Activated CD4-positive, alpha-beta memory T cell treated with anti-CD3 and anti-CD28 coated beads, Interleukin-2, amount 10 ng/mL, durations not matched to agents 7 days and 5 days (primary cell): ENCODE measurements at regions of chr13 and their contacts with region 1.

Region 1: DNA sequence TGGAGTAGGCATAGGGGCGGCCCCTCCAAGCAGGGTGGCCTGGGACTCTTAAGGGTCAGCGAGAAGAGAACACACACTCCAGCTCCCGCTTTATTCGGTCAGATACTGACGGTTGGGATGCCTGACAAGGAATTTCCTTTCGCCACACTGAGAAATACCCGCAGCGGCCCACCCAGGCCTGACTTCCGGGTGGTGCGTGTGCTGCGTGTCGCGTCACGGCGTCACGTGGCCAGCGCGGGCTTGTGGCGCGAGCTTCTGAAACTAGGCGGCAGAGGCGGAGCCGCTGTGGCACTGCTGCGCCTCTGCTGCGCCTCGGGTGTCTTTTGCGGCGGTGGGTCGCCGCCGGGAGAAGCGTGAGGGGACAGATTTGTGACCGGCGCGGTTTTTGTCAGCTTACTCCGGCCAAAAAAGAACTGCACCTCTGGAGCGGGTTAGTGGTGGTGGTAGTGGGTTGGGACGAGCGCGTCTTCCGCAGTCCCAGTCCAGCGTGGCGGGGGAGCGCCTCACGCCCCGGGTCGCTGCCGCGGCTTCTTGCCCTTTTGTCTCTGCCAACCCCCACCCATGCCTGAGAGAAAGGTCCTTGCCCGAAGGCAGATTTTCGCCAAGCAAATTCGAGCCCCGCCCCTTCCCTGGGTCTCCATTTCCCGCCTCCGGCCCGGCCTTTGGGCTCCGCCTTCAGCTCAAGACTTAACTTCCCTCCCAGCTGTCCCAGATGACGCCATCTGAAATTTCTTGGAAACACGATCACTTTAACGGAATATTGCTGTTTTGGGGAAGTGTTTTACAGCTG is at the starts of genes BRCA2 and ZAR1L:
- DNase-seq: peak; percentile 92
- H3K4me3 Mint-ChIP-seq: peak within 1 kb of the TSS; percentile 95
- H3K27ac Mint-ChIP-seq: peak within 1 kb of the TSS; percentile 98
- H3K4me1 Mint-ChIP-seq: peaks cover 43% of the 10 kb centered on the region
- H3K27me3 Mint-ChIP-seq: no peaks in the 10 kb centered on the region
- total RNA-seq, gene BRCA2: 18.3 to 23.6 TPM
- total RNA-seq, gene ZAR1L: not detected

Region 2: GRCh38 chr13:31909864-31910551 is 405.4 kb before region 1 on chr13:
- CTCF ChIA-PET with region 1: interaction called, 17 read pairs
- POLR2A ChIA-PET with region 1: interaction called, 14 read pairs
- DNase-seq: peak; percentile 56
- H3K4me3 Mint-ChIP-seq: no peak overlapping the region
- H3K27ac Mint-ChIP-seq: no peak overlapping the region
- H3K4me1 Mint-ChIP-seq: peaks cover 36% of the 10 kb centered on the region
- H3K27me3 Mint-ChIP-seq: no peaks in the 10 kb centered on the region

Region 3: GRCh38 chr13:32031025-32031814 is 284.2 kb before region 1 on chr13 and contains the start of gene FRY:
- CTCF ChIA-PET with region 1: no interaction called
- POLR2A ChIA-PET with region 1: interaction called, 11 read pairs
- DNase-seq: peak; percentile 56
- H3K4me3 Mint-ChIP-seq: peak within 1 kb of the TSS; percentile 82
- H3K27ac Mint-ChIP-seq: peak within 1 kb of the TSS; percentile 53
- H3K4me1 Mint-ChIP-seq: peaks cover 25% of the 10 kb centered on the region
- H3K27me3 Mint-ChIP-seq: peaks cover 9% of the 10 kb centered on the region
- total RNA-seq, gene FRY: 13.1 to 13.8 TPM

Region 4: DNA sequence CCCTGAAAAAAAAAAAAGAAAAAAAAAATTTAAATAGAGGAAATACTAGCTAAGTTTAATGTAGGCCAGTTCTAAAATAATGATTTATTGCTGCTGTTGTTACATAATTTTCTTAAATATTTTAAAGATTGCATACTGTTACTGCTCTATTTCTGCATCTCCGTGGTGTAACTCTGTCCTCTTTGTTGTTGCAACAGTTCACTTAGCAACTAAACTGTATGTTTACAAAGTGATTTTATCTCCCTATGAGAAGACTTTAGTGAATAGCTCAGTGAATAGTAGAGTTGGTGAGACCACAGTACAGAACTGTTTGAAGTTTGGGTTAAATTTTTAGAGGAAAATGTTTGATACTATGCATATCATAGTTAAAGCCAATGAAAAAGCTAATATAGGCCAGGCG is 19.2 kb after region 1 on chr13:
- CTCF ChIA-PET with region 1: no interaction called
- POLR2A ChIA-PET with region 1: interaction called, 19 read pairs
- DNase-seq: no peak
- H3K4me3 Mint-ChIP-seq: no peak overlapping the region
- H3K27ac Mint-ChIP-seq: no peak overlapping the region
- H3K4me1 Mint-ChIP-seq: no peaks in the 10 kb centered on the region
- H3K27me3 Mint-ChIP-seq: no peaks in the 10 kb centered on the region

Region 5: DNA sequence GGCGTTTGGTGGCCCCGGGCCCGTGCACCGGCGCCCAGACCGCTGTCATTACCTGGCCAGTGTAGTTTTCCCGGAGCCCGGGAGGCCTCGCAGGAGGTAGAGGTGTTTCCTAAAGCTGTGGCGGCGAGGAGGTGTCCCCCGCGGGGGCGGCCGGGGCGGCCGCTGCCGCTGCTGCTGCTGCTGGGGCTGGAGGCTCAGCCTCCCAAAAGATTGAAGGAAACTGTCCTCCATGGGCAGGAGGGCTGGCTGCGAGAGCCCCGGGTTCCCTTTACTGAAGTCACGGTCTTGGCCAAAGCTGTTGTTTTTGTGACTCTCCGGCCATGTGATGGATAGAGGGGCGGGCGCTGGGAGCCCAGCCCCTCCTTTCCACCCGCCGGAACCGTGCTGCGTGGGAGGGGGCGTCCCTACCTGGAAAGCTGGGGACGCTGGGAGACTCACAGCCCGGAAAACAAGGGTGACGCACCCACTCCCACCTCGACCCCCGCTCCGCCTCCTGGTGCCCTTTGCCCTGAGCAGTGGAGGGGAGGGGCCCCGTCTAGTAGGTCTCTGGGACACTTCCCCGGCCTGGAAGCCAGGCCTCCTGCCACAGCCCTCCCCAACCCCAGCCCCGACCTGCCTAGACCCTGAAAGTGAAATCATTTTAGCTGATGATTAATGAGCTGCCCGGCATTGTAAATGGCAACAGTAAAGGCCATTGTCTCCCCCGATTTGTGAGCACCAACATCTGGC is 112.6 kb after region 1 on chr13 and contains the start of gene N4BP2L1:
- CTCF ChIA-PET with region 1: no interaction called
- POLR2A ChIA-PET with region 1: interaction called, 121 read pairs
- DNase-seq: peak; percentile 82
- H3K4me3 Mint-ChIP-seq: peak within 1 kb of the TSS; percentile 99
- H3K27ac Mint-ChIP-seq: peak within 1 kb of the TSS; percentile 99
- H3K4me1 Mint-ChIP-seq: peaks cover 42% of the 10 kb centered on the region
- H3K27me3 Mint-ChIP-seq: no peaks in the 10 kb centered on the region
- total RNA-seq, gene N4BP2L1: 29.9 to 33.8 TPM

Region 6: DNA sequence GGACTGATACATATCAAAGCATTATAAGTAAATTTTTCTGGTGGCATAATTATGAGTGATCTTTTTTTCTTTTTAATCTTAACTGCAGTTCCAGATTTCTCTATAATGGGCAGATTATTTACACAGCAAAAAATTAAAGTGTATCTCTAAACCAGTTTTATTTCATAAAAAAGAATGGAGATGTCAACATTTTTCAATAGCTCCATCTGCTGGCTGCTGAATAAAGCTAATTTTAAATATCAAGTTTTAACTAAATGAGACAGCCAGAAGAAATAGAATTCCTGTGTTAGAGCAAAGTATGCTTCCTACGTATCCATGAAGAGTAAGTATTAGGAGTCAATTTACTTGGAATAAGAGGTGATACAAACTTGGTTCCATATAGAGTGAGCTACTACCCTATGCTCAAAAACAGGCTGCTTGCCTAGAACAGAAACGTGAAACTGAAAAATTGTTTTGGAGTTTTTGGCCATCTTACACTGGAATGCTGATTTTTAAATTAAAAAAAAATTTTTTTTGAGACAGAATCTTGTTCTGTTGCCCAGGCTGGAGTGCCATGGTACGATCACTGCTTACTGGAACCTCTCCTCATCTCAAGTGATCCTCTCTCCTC is 265.8 kb after region 1 on chr13:
- CTCF ChIA-PET with region 1: interaction called, 6 read pairs
- POLR2A ChIA-PET with region 1: interaction called, 11 read pairs
- DNase-seq: no peak
- H3K4me3 Mint-ChIP-seq: no peak overlapping the region
- H3K27ac Mint-ChIP-seq: no peak overlapping the region
- H3K4me1 Mint-ChIP-seq: peaks cover 11% of the 10 kb centered on the region
- H3K27me3 Mint-ChIP-seq: peaks cover 3% of the 10 kb centered on the region

Region 7: DNA sequence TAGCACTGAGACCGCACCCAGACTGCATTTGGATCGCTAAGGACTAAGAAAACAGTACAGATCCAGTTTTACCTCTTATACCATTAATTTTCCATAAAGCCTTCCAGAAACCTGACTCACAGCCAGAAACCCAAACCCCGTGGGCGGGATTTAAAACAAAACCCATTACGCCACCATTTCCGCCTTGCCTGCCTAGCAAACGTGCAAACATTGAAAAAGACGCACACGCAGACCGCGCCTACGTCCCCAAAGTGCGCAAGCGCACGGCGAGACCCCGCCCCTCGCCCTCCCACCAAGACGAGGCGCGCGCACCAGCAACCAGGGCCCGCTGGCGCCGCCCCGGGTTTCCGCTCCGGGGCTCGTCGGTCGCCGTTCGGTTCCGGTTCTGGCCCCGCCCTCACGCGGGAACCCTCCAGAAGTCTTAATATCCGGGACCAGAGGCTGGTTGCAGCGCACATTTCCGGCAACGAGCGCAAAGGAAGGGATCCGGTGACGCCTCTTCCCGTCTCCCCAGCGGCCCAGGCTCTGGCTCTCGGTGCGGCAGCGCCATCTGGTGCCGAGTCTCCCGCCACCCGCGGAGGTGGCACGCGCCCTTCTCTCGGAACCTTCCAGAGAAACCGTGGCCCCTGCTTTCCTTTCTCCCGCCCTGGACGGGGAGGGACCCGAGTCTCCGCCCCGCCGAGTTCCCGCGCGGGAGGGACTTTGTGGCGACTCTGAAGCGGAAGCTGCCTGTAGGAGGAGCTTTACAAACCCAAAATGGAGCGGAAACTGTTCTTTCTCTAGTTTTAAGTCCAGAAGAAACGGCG is 1227.1 kb after region 1 on chr13:
- CTCF ChIA-PET with region 1: no interaction called
- POLR2A ChIA-PET with region 1: interaction called, 21 read pairs
- DNase-seq: peak; percentile 99
- H3K4me3 Mint-ChIP-seq: peak overlapping the region; percentile 76
- H3K27ac Mint-ChIP-seq: peak overlapping the region; percentile 99
- H3K4me1 Mint-ChIP-seq: peaks cover 33% of the 10 kb centered on the region
- H3K27me3 Mint-ChIP-seq: no peaks in the 10 kb centered on the region